Posterior vena cava (tissue), 2 donors: ENCODE measurements at regions of chr1 and their contacts with region 1.

Region 1: GRCh38 chr1:170993151-170993550 is 57.8 kb downstream of the MROH9 start:
- DNase-seq: no peak

Region 2: DNA sequence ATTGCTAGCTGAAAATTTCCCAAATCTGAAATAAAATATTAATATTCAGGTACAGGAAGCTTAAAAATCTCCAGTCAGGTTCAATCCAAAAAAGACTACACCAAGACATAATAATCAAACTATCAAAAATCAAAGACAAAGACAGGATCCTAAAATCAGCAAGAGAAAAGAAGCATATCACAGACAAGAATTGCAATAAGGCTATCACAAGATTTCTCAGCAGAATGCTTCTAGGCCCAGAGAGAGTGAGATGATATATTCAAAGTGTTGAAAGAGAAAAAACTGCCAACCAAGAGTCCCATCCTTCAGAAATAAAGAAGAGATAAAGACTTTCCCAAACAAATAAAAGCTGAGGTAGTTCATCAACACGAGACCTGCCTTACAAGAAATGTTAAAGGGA is 1358.3 kb before region 1 on chr1:
- intact Hi-C with region 1: loop called in 1 of 2 experiments (anchors 5 kb)
- DNase-seq: no peak

Region 3: DNA sequence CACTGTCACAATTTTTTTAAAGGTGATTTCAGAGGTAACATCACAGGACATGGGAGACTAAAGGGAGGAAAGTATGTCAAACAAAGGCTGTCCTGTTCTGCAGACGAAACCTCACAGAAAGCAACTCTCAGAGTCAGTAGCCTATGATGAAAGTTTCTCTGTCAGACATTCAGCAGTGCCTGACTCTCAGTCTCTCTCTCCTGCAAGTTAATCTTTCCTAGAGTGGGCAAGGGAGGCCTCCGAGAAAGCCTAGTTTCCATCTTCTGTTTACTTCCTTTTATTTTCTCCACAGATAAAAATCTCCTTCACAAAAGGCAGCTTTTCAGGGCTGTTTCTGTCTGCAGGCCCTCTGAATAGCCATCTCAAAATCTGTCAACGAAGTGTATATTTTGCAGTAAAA is 167.1 kb after region 1 on chr1:
- intact Hi-C with region 1: no loop called
- DNase-seq: no peak